ENCODE measurements at regions of chr16 and their contacts with region 1.

Region 1: DNA sequence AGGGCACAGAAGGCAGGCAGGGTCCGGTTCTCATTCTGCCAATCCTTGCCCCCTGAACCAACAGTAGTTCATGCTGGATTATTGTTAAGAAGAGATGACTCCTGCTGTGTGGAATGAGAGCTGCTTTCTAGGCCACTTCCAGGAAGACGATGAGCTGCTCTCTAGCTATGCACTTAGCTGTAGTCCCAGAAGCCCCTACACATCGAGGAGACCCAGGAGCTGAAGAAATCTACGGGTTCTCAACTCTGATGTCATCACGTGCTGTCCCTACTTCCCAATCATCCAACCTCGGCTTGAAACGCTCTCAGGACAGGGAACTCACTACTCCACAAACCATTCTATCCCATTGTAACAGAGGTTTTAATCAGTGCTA is 29.0 kb upstream of the EMP2 start:
- DNase-seq: peak; percentile 10
- ATAC-seq: no peak
- H3K4me3 ChIP-seq: no peak overlapping the region
- H3K27ac ChIP-seq: no peak overlapping the region
- H3K4me1 ChIP-seq: no peaks in the 10 kb centered on the region
- H3K27me3 ChIP-seq: no peaks in the 10 kb centered on the region
- CTCF ChIP-seq: no peak

Region 2: GRCh38 chr16:10256784-10257641 is 352.4 kb before region 1 on chr16:
- CTCF ChIA-PET with region 1: interaction called, 13 read pairs
- POLR2A ChIA-PET with region 1: no interaction called
- in situ Hi-C with region 1: no loop called
- intact Hi-C with region 1: no loop called
- DNase-seq: no peak
- ATAC-seq: peak; percentile 83
- H3K4me3 ChIP-seq: no peak overlapping the region
- H3K27ac ChIP-seq: no peak overlapping the region; the same call in 1 of the 2 replicates
- H3K4me1 ChIP-seq: no peaks in the 10 kb centered on the region; the same call in 1 of the 2 replicates
- H3K27me3 ChIP-seq: no peaks in the 10 kb centered on the region
- CTCF ChIP-seq: peak; percentile 97

Measured in Panc1 (cell line).